PC-3 (cell line): ENCODE measurements at regions of chr21 and their contacts with region 1.

Region 1: GRCh38 chr21:25862596-25862995 is 127.8 kb downstream of the GABPA start:
- DNase-seq: peak; percentile 74
- ATAC-seq: peak; percentile 57
- H3K4me3 ChIP-seq: no peak overlapping the region
- H3K27ac ChIP-seq: no peak overlapping the region
- H3K4me1 ChIP-seq: no peaks in the 10 kb centered on the region
- H3K27me3 ChIP-seq: no peaks in the 10 kb centered on the region
- CTCF ChIP-seq: peak; percentile 96

Region 2: GRCh38 chr21:25734904-25735645 is 127.5 kb before region 1 on chr21 and contains the starts of genes ATP5PF and GABPA:
- CTCF ChIA-PET with region 1: no interaction called
- POLR2A ChIA-PET with region 1: no interaction called
- intact Hi-C with region 1: loop called (anchors 10 kb)
- DNase-seq: peak; percentile 98
- ATAC-seq: peak; percentile 90
- H3K4me3 ChIP-seq: peak within 1 kb of the TSS; percentile 93
- H3K27ac ChIP-seq: peak within 1 kb of the TSS; percentile 97
- H3K4me1 ChIP-seq: peaks cover 18% of the 10 kb centered on the region; the same call in 1 of the 2 replicates
- H3K27me3 ChIP-seq: no peaks in the 10 kb centered on the region
- CTCF ChIP-seq: no peak
- total RNA-seq, gene ATP5PF: 170 and 184 TPM in 2 replicates
- total RNA-seq, gene GABPA: 19.0 and 19.9 TPM in 2 replicates

Region 3: DNA sequence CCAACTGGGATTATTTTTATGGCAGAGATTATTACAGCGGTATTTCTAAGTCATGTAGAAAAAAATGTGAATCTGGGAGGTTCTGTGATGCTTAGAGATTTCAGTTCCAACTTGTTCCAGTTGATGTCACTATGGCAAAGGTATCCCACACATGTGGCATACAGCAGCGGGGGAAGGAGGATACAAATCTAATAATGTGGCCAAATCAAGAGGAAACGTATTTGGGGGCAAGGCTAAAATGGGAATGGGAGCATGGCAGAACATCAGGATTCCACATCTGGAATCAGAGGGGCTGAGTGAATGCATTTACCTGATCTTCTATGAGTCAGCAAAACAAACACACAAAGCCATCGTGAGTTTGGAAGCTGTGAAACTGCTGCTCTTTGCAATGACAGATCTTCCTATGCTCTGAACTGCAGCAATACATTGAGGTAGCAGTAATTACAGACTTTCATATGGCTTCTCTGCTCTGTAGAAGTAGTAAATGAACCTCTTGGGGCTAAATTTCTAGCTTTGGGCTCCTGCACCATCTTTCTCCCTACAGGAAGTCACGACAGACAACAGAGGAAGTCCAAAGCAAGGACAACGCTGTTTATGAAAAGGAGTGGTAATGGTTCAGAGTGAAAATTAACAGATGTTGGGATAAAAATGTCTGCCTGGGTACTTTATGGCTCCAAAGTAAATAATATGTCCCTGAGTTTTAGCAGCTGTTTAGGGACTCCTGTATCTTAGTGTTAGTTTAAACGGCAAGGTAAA is 72.3 kb before region 1 on chr21:
- CTCF ChIA-PET with region 1: interaction called, 3 read pairs
- POLR2A ChIA-PET with region 1: no interaction called
- intact Hi-C with region 1: loop called (anchors 1 kb)
- DNase-seq: peak; percentile 58
- ATAC-seq: peak; percentile 85
- H3K4me3 ChIP-seq: peak overlapping the region; percentile 54
- H3K27ac ChIP-seq: peak overlapping the region; percentile 12
- H3K4me1 ChIP-seq: peaks cover 12% of the 10 kb centered on the region; the same call in 1 of the 2 replicates
- H3K27me3 ChIP-seq: no peaks in the 10 kb centered on the region
- CTCF ChIP-seq: peak; percentile 72

Region 4: GRCh38 chr21:26513212-26513611 is 650.6 kb after region 1 on chr21:
- CTCF ChIA-PET with region 1: no interaction called
- POLR2A ChIA-PET with region 1: no interaction called
- intact Hi-C with region 1: no loop called
- DNase-seq: peak; percentile 77
- ATAC-seq: peak; percentile 93
- H3K4me3 ChIP-seq: no peak overlapping the region
- H3K27ac ChIP-seq: peak overlapping the region; percentile 53
- H3K4me1 ChIP-seq: peaks cover 11% of the 10 kb centered on the region
- H3K27me3 ChIP-seq: no peaks in the 10 kb centered on the region
- CTCF ChIP-seq: no peak